Dorsolateral prefrontal cortex (tissue), 120 donors: ENCODE measurements at regions of chr3 and their contacts with region 1.

Region 1: GRCh38 chr3:124995460-124995994 is 60.3 kb downstream of the HEG1 start:
- DNase-seq: peak; percentile 42 to 79 (median 71)
- H3K4me3 ChIP-seq: peak overlapping the region in 2 of 59 donors; percentile 6 to 29
- H3K27ac ChIP-seq: peak overlapping the region in 23 of 59 donors; percentile 1 to 73 (median 35)
- H3K27me3 ChIP-seq: no peaks in the 10 kb centered on the region
- CTCF ChIP-seq: peak; percentile 51 to 96 (median 84)

Region 2: DNA sequence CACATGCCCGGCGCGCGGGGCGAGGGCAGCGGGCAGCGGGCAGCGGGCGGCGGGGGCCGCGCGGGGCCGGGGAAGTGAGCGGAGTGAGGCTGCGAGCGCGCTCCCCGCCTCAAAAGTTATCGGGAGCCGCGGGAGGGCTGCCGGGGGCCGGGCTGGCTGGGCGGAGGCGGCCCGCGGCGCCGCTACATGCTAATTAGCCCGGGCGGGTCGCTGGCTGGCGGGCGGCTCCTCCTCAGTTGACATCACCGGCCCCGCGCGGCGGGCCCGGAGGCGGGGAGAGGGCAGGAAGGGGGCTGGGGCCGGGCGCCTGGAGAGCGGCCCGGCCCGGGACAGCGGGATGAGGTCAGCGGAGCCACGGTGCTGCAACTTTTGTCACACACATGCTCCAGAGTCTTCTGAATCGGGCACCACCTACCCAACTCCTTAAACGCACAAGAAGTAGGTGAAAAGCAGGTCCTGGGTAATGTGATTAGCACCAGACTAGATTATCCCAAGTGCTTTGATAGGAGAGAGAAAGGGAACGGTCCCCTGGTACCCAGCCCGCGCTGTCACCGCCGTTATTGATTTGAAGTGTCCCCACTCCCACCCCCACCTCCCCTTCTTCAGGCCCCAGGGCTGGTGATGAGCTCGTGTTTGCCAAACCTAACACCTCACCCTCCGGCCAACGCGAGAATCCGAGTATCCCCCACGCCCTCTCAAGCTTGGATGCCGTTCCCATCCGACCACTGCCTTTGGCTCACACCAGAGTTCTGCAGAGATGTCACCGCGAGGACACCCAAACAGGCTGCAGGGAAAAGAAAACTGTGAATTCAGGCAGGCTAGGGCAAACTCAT is 60.6 kb after region 1 on chr3 and contains the start of gene HEG1:
- intact Hi-C with region 1: loop called (anchors 2 to 5 kb)
- DNase-seq: peak; percentile 29 to 86 (median 76)
- H3K4me3 ChIP-seq: peak within 1 kb of the TSS; percentile 56 to 89 (median 74)
- H3K27ac ChIP-seq: peak within 1 kb of the TSS; percentile 13 to 93 (median 85)
- H3K27me3 ChIP-seq: no peaks in the 10 kb centered on the region
- CTCF ChIP-seq: peak in 4 of 56 donors; percentile 10 to 17 (median 10)
- total RNA-seq, gene HEG1: 12.8 to 65.6 (median 29.0) TPM

Region 3: GRCh38 chr3:125072301-125072700 is 76.8 kb after region 1 on chr3:
- intact Hi-C with region 1: no loop called
- DNase-seq: no peak
- H3K4me3 ChIP-seq: no peak overlapping the region
- H3K27ac ChIP-seq: no peak overlapping the region
- H3K27me3 ChIP-seq: no peaks in the 10 kb centered on the region
- CTCF ChIP-seq: no peak

Region 4: GRCh38 chr3:125141596-125142419 is 146.3 kb after region 1 on chr3:
- intact Hi-C with region 1: no loop called
- DNase-seq: peak in 4 of 10 donors; percentile 44 to 62 (median 62)
- H3K4me3 ChIP-seq: peak overlapping the region; percentile 22 to 68 (median 53)
- H3K27ac ChIP-seq: peak overlapping the region in 49 of 59 donors; percentile 2 to 88 (median 54)
- H3K27me3 ChIP-seq: no peaks in the 10 kb centered on the region
- CTCF ChIP-seq: peak in 37 of 56 donors; percentile 10 to 48 (median 29)

Region 5: DNA sequence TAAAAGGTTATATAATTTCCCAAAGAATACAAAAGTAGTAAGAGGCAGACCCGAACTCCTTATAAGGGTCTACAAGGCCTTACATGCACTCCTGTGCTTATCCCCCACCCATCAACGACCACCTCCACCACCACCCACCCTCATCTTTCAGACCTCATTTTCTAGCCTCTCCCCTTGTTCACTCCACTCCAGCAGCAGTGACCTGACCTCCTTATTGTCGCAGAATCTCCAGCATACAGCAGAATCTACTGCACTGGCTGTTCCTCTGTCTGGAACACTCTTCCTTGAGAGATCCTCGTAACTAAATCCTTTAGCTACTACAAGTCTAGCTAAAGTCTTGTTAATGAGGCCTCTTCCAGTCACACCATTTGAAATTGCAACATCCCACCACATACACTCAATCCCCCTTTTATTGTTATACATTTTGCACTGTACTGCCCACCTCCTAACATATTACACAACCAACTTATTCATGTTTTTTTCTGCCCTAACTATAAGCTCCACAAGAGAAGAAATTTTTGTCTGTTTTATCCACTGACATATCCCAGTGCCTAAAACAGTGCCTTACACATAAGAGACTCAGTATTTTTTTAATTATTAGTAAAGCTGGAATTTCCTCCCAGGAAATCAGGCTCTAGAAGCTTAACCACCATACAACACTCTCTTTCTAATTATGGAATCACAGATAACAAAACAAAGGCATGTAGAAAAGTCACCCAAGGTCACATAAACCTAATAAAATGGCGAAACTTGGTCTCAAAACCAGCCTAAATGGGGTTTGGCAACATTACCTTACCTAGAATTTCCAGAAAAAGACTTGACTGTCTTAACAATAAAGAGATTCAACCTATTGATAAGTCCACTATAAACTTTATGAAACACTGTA is 339.4 kb after region 1 on chr3:
- intact Hi-C with region 1: no loop called
- DNase-seq: no peak
- H3K4me3 ChIP-seq: no peak overlapping the region
- H3K27ac ChIP-seq: no peak overlapping the region
- H3K27me3 ChIP-seq: no peaks in the 10 kb centered on the region
- CTCF ChIP-seq: no peak

Region 6: DNA sequence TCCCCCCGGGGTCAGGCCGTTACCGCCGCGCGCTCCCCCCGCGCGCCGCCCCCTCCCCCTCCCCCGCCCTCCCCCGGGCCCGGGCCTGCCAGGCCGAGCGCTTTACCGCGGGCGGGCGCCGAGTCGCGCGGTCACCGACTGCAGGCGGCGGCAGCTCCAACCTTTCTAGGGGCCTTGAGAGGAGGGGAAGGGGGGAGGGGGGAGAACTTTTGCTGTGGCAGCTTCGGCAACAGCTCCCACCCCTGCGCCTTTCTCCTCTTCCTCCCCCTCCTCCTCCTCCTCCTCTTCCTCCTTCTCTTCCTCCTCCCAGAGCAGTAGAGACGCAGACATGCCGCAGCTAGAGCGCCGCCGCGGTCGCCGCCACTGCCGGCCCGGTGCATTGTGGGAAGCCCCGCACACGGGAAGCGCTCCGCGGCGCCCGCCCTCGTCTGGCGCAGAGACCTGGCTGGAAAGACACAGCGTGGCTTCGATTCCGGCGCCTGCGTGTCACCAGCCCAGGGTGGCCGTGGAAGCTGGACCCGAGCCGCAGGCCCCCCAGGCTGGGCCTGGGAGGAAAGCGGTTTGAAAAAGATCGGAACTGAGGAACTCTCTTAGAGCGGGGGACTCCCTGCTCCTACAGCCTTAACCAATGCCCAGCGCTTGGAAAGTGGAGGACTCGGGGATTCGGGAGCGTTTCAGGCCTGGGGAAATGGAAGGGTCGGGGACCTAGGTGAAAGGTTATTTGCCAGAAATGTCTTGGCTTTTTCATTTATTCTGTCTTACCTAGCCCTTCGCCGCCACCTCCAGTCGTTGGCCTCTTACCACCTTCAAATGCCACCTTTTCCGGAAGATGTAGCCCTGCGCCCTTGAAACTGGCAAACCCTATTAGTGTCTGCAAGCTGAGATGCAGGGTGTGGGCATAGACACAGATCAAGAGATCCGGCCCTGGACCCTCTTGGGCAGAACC is 379.7 kb after region 1 on chr3 and contains the start of gene ZNF148:
- intact Hi-C with region 1: loop called (anchors 5 kb)
- DNase-seq: peak; percentile 83 to 94 (median 88)
- H3K4me3 ChIP-seq: peak within 1 kb of the TSS; percentile 60 to 98 (median 86)
- H3K27ac ChIP-seq: peak within 1 kb of the TSS; percentile 73 to 97 (median 91)
- H3K27me3 ChIP-seq: no peaks in the 10 kb centered on the region
- CTCF ChIP-seq: peak in 51 of 56 donors; percentile 15 to 67 (median 44)
- total RNA-seq, gene ZNF148: 55.2 to 94.4 (median 74.4) TPM

Region 7: GRCh38 chr3:125585595-125586223 is 590.2 kb after region 1 on chr3:
- intact Hi-C with region 1: loop called (anchors 5 to 10 kb)
- DNase-seq: peak in 8 of 10 donors; percentile 44 to 75 (median 57)
- H3K4me3 ChIP-seq: no peak overlapping the region
- H3K27ac ChIP-seq: peak overlapping the region in 1 of 59 donors; percentile 43
- H3K27me3 ChIP-seq: no peaks in the 10 kb centered on the region
- CTCF ChIP-seq: peak; percentile 67 to 96 (median 88)